ENCODE measurements at regions of chr7 and their contacts with region 1.

Region 1: DNA sequence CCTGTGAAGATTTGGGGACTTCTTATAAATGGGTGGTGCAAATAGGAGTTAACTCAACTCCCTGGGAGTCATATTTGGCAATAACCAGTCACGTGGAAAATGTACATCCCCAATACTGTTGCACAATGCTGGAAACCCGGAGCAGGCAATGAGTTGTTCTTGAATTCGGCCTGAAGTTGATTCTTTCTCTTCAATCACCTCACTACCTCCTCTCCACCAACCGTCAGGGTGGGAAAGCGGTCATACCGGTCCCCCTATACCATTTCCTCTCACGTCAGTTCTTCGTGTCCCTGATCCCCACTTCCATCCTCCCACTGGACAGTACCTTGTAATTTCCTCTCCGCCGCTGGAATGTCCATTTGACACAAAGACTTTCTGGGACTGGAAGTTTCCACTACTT is 2.8 kb downstream of the GIMAP5 start:
- DNase-seq: no peak
- ATAC-seq: no peak

Region 2: DNA sequence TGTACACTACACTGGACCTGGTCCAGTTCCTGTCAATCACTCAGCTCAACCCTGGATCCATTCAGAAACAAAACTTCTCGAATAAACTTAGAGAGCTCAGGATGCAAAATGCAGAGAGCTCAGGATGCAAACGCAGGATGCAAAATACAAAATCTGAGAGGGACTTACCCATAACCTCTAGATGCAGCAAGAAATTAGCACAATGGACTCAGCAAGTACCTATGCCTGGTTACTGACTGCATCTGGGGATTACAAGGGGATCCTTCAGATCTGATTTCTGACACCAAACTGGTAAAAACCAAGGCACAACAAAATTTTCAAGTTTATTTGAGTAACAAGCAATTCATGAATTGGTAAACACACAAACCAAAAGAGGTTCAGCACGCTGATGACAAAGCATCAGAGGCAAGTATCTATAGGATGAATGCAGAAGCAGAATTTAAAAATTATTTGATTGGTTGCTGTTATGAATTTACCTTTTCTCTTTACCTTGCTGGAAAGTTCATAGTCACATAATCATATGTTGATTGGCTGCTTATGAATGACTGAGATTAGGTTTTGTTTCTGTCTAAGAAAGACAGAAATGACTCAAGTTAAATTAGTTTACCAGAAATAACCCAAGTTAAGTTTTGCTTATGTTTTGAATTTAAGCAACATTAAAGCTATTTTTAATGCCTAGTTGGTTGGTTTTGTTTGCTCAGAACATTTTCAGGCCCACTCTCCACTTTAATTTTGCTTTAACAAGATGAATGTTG is 119.3 kb before region 1 on chr7:
- intact Hi-C with region 1: loop called (anchors 10 kb)
- DNase-seq: no peak
- ATAC-seq: no peak